K562 (cell line): ENCODE measurements at regions of chr10 and their contacts with region 1.

Region 1: GRCh38 chr10:23325132-23325531 is 19.5 kb downstream of the C10orf67 start:
- DNase-seq: no peak
- ATAC-seq: no peak
- H3K4me3 ChIP-seq: no peak overlapping the region
- H3K27ac ChIP-seq: no peak overlapping the region
- H3K4me1 ChIP-seq: no peaks in the 10 kb centered on the region
- H3K27me3 ChIP-seq: no peaks in the 10 kb centered on the region
- CTCF ChIP-seq: no peak
- EP300 ChIP-seq: no peak
- POLR2A ChIP-seq: no peak
- RAD21 ChIP-seq: no peak

Region 2: GRCh38 chr10:23525406-23525805 is 200.3 kb after region 1 on chr10:
- CTCF ChIA-PET with region 1: no interaction called
- POLR2A ChIA-PET with region 1: no interaction called
- in situ Hi-C with region 1: loop called (anchors 10 kb)
- intact Hi-C with region 1: no loop called
- DNase-seq: no peak
- ATAC-seq: no peak
- H3K4me3 ChIP-seq: no peak overlapping the region
- H3K27ac ChIP-seq: no peak overlapping the region
- H3K4me1 ChIP-seq: no peaks in the 10 kb centered on the region
- H3K27me3 ChIP-seq: no peaks in the 10 kb centered on the region
- CTCF ChIP-seq: 0 out of 6 replicates have a peak, but pooled peaks of 1 of the 3 experiments have one; percentile 24
- EP300 ChIP-seq: no peak
- POLR2A ChIP-seq: no peak
- RAD21 ChIP-seq: peak in 1 of 2 experiments; percentile 31; a peak in 1 of 4 replicates